Ascending aorta (tissue), 2 donors: ENCODE measurements at regions of chr1 and their contacts with region 1.

Region 1: DNA sequence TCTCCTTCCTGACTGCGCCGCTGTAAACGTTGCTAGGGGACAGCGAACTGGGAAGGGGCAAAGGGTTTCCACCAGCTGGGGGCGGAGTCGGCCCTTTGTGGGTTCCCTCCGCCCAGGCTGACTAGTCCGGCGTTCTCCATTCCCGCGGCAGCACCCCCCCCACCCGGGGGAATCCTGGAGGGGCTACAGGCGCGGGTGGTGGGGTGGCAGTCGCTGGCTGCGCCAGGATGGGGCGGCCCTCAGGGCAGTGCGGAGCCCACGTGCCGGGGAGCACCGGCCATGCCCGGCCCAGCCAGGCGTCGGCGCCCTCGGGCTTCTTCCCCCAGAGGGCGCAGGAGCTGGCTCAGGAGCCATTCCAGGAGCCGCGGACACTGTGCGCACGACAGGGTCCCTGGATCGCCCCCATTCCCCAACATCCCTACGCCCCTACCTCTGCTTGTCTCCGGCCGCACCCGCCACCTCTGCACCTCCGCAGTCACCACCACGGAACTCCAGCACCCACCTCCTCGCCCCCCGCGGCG is 476 bp downstream of the BATF3 start:
- DNase-seq: peak in 1 of 2 donors; percentile 74
- H3K4me3 ChIP-seq: peak overlapping the region; percentile 73 to 90
- H3K27ac ChIP-seq: peak overlapping the region; percentile 81 to 88
- H3K4me1 ChIP-seq: peaks cover 5 to 13% of the 10 kb centered on the region in 2 donors
- H3K27me3 ChIP-seq: no peaks in the 10 kb centered on the region
- CTCF ChIP-seq: peak in 2 of 3 experiments; percentile 47 to 61

Region 2: DNA sequence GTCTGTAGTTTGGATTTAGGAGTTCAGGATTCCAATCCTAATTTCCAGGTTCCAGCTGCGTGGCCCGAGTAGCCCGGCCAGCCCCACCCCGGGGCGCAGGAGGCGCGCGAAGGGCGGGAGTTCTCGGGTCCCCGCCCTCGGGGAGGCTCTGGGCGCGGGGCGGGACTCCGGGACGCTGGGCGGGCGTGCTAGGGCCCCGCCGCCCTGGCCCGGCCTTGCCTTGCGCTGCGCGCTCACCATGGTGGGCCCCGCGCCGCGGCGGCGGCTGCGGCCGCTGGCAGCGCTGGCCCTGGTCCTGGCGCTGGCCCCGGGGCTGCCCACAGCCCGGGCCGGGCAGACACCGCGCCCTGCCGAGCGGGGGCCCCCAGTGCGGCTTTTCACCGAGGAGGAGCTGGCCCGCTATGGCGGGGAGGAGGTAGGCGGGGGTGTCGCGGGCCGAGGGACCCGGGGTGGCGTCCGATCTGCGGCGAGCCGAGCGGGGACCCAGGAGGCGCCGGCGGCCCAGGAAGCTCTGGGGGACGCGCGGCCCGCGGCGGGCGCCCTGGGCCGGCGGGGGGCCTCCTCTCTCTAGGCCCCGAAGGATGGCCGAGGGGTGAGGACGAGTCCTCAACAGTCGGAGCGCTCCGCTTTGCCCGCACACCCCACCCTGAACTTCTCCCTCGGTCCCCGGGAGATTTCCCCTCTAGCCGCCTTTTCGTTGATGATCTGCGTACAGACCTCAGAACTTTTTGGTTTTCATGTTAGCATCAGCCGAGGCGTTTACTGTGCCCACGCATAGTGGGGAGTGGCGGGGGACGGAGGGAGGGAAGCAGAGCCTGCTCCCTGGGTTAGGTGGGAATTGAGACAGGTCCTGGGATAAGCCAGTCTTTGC is 266.2 kb before region 1 on chr1 and contains the start of gene NENF:
- intact Hi-C with region 1: loop called (anchors 2 kb)
- DNase-seq: peak; percentile 50 to 92
- H3K4me3 ChIP-seq: peak within 1 kb of the TSS; percentile 87 to 97
- H3K27ac ChIP-seq: peak within 1 kb of the TSS; percentile 88 to 98
- H3K4me1 ChIP-seq: peaks cover 3 to 9% of the 10 kb centered on the region in 2 donors
- H3K27me3 ChIP-seq: no peaks in the 10 kb centered on the region
- CTCF ChIP-seq: peak in 1 of 3 experiments; percentile 14
- total RNA-seq, gene NENF: 186 TPM

Region 3: DNA sequence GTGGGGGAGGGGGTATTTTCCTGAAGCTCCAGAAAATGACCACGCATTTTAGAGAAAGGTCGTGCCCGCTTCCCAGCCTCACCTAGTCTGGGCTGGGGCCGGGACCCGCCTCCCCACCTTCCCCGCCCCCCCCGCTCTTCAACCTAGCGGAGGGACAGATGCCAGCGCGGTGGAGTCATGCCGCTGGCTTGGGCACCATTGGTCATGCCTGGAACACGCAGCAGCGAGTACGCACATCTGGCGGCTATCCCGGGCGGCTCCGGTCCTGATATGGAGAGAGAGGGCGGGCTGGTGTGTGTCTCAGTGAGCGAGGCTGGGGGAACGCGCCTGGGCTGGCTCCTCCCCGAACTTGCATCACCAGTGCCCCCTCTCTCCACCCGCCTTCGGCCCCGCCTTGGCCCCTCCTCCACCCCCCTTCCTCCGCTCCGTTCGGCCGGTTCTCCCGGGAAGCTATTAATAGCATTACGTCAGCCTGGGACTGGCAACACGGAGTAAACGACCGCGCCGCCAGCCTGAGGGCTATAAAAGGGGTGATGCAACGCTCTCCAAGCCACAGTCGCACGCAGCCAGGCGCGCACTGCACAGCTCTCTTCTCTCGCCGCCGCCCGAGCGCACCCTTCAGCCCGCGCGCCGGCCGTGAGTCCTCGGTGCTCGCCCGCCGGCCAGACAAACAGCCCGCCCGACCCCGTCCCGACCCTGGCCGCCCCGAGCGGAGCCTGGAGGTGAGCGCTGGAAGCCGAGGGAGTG is 90.8 kb before region 1 on chr1 and contains the start of gene ATF3:
- intact Hi-C with region 1: loop called (anchors 2 kb)
- DNase-seq: peak; percentile 99 to 100
- H3K4me3 ChIP-seq: peak within 1 kb of the TSS; percentile 64 to 78
- H3K27ac ChIP-seq: peak within 1 kb of the TSS; percentile 96 to 99
- H3K4me1 ChIP-seq: peaks cover 0 to 25% of the 10 kb centered on the region in 2 donors
- H3K27me3 ChIP-seq: no peaks in the 10 kb centered on the region
- CTCF ChIP-seq: no peak
- total RNA-seq, gene ATF3: 79.1 TPM

Region 4: GRCh38 chr1:212665241-212666115 is 33.7 kb before region 1 on chr1:
- intact Hi-C with region 1: loop called (anchors 2 kb)
- DNase-seq: peak; percentile 42 to 88
- H3K4me3 ChIP-seq: peak overlapping the region; percentile 64 to 71
- H3K27ac ChIP-seq: peak overlapping the region; percentile 48 to 55
- H3K4me1 ChIP-seq: peaks cover 0 to 9% of the 10 kb centered on the region in 2 donors
- H3K27me3 ChIP-seq: no peaks in the 10 kb centered on the region
- CTCF ChIP-seq: peak; percentile 92 to 98 (median 94)